Activated T-helper 2 cell treated with anti-CD3 and anti-CD28 coated beads, Interferon-gamma antibody, Interleukin-2, Interleukin-4, amounts not matched to agents 10 μg/mL and 5 μg/mL and 100 μg/mL, durations not matched to agents 14 hours and 24 hours and 36 hours (primary cell): ENCODE measurements at regions of chr13 and their contacts with region 1.

Region 1: GRCh38 chr13:99442273-99442895 is 58.9 kb upstream of the TM9SF2 start:
- DNase-seq: no peak
- H3K4me3 Mint-ChIP-seq: no peak overlapping the region
- H3K27ac Mint-ChIP-seq: no peak overlapping the region
- H3K4me1 Mint-ChIP-seq: peaks cover 20% of the 10 kb centered on the region
- H3K27me3 Mint-ChIP-seq: peaks cover 24% of the 10 kb centered on the region

Region 2: GRCh38 chr13:99275093-99275469 is 167.3 kb before region 1 on chr13:
- intact Hi-C with region 1: no loop called
- DNase-seq: peak; percentile 38
- H3K4me3 Mint-ChIP-seq: peak overlapping the region; percentile 11
- H3K27ac Mint-ChIP-seq: peak overlapping the region; percentile 87
- H3K4me1 Mint-ChIP-seq: peaks cover 83% of the 10 kb centered on the region
- H3K27me3 Mint-ChIP-seq: no peaks in the 10 kb centered on the region

Region 3: DNA sequence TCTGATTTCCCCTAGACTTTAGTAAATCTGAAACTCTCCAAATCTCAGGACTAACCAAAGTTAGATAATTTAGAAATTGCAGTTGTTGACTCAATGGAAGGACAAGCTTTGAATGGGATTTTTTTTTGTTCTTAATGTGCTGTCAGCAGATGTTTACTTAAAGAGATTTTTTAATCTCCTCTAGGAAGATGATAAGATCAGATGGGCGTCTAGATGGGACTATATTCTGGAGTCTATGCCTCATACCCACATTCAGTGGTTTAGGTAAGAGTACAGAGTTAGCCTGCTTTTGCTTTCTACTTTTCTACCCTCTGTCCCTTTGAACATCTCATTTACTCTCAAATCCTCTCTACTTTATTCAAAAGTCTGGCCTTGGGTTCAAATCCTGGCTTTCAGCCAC is 98.1 kb after region 1 on chr13:
- intact Hi-C with region 1: loop called (anchors 2 kb)
- DNase-seq: no peak
- H3K4me3 Mint-ChIP-seq: no peak overlapping the region
- H3K27ac Mint-ChIP-seq: no peak overlapping the region
- H3K4me1 Mint-ChIP-seq: peaks cover 19% of the 10 kb centered on the region
- H3K27me3 Mint-ChIP-seq: no peaks in the 10 kb centered on the region

Region 4: DNA sequence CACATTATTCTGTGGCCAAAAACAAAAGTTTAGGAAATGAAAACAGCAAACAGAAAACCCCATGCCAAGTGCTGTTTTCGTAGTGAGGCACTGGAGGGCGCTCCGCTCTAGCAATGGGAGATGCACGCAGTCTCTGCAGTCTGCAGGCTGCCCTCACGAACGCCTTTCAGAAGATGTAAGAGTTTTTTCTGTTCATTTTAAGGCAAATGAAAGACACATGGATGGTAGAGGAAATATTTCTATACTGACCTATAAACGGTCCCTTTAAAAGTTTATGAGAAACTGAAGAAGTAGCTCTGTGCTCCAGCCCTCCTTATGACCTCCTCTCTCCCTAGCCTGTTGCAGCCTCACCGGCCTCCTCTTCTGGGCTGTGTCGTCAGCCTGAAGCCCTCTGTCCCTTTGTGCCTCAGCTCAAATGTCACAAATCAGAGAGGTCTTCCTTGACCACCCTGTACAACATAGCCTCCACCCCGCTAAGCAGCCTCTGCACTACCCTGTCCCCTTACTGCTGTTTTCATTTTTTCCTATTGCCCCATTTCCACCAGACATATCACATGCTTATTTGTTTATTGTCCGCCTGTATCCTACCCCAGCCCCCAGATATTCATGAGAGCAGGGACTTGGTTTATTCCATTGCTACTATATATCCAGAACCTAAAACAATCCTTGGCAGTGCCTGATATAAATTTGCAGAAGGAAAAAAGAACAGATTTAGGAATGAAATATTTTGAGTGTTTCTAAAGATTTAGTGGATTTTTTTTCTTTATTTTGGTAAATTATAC is 175.3 kb after region 1 on chr13:
- intact Hi-C with region 1: loop called (anchors 5 kb)
- DNase-seq: no peak
- H3K4me3 Mint-ChIP-seq: no peak overlapping the region
- H3K27ac Mint-ChIP-seq: no peak overlapping the region
- H3K4me1 Mint-ChIP-seq: no peaks in the 10 kb centered on the region
- H3K27me3 Mint-ChIP-seq: no peaks in the 10 kb centered on the region